Common myeloid progenitor, CD34-positive (primary cell): ENCODE measurements at regions of chr16 and their contacts with region 1.

Region 1: GRCh38 chr16:58853854-58854791 is 120.0 kb upstream of the GOT2 start:
- DNase-seq: peak in 2 of 3 donors; percentile 67 to 72
- H3K4me3 ChIP-seq: no peak overlapping the region
- H3K27ac ChIP-seq: no peak overlapping the region
- H3K4me1 ChIP-seq: peaks cover 5 to 40% (median 21%) of the 10 kb centered on the region in 4 experiments
- H3K27me3 ChIP-seq: no peaks in the 10 kb centered on the region

Region 2: GRCh38 chr16:58843675-58844074 is 10.4 kb before region 1 on chr16:
- CTCF ChIA-PET with region 1: interaction called, 28 read pairs
- POLR2A ChIA-PET with region 1: interaction called, 4 read pairs
- DNase-seq: peak; percentile 65 to 85 (median 82)
- H3K4me3 ChIP-seq: no peak overlapping the region
- H3K27ac ChIP-seq: no peak overlapping the region
- H3K4me1 ChIP-seq: peaks cover 0 to 2% (median 0%) of the 10 kb centered on the region in 4 experiments
- H3K27me3 ChIP-seq: no peaks in the 10 kb centered on the region

Region 3: GRCh38 chr16:58889516-58889915 is 35.4 kb after region 1 on chr16:
- CTCF ChIA-PET with region 1: no interaction called
- POLR2A ChIA-PET with region 1: no interaction called
- DNase-seq: no peak
- H3K4me3 ChIP-seq: no peak overlapping the region
- H3K27ac ChIP-seq: no peak overlapping the region
- H3K4me1 ChIP-seq: no peaks in the 10 kb centered on the region
- H3K27me3 ChIP-seq: no peaks in the 10 kb centered on the region